Mammary epithelial cell (primary cell): ENCODE measurements at regions of chr15 and their contacts with region 1.

Region 1: GRCh38 chr15:82680200-82681102 is 29.2 kb downstream of the AP3B2 start:
- DNase-seq: peak; percentile 71
- H3K4me3 ChIP-seq: peak overlapping the region; percentile 67 to 80 (median 69)
- H3K27ac ChIP-seq: no peak overlapping the region
- H3K4me1 ChIP-seq: peaks cover 10% of the 10 kb centered on the region
- H3K27me3 ChIP-seq: no peaks in the 10 kb centered on the region
- CTCF ChIP-seq: peak in 1 of 2 donors; percentile 57

Region 2: DNA sequence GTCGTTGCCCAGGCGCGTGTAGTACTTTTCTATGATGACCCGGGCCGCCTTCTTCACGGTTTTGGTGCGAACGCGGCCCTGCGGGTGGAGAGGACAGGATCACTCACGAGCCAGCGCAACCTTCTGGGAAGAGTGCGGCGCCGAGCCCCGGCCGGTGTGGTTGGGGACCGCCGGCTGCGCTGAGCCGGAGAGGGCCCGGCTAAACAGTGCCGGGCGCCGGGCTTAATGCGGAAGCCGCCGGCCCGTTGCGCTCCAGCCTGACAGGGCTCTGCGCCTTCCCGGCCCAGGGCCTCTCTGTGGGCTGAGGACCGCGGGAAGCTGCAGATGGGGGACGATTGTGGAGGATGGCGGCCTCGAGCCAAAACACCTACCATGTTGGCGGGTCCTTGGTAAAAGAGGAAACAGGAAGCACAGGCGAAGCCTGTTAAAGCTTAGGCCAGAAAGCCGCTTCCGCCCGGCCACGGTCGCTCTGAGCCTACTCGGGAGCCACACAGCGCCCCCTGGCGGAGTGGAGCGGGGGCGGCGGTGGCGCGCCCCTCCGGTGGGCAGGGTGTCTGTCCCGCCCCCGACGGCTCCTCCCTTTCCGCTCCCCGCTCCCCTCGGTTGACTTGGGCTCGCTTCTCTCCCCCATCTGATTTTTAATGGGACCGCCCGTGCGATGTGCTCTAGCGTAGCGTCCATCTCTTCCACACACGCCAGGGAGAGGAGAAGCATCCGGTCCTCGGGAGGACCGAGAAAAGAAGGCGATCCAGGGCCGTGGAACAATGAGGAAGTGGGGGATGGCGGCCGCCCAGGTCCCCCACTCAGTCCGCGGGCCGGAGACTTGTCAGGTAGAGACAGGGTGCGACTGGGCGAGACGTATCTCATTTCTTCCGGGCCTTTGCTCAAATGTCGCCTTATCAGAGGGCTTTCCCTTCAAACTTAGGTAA is 140.1 kb before region 1 on chr15 and contains the start of gene RPS17:
- CTCF ChIA-PET with region 1: no interaction called
- dilution Hi-C with region 1: no loop called
- in situ Hi-C with region 1: no loop called
- intact Hi-C with region 1: loop called (anchors 2 kb)
- DNase-seq: peak; percentile 96
- H3K4me3 ChIP-seq: peak within 1 kb of the TSS; percentile 83 to 92 (median 92)
- H3K27ac ChIP-seq: peak within 1 kb of the TSS; percentile 73
- H3K4me1 ChIP-seq: peaks cover 21% of the 10 kb centered on the region
- H3K27me3 ChIP-seq: no peaks in the 10 kb centered on the region
- CTCF ChIP-seq: peak; percentile 78 to 98
- total RNA-seq, gene RPS17: 1,069 to 1,616 TPM